Mammary epithelial cell (primary cell): ENCODE measurements at regions of chr2 and their contacts with region 1.

Region 1: DNA sequence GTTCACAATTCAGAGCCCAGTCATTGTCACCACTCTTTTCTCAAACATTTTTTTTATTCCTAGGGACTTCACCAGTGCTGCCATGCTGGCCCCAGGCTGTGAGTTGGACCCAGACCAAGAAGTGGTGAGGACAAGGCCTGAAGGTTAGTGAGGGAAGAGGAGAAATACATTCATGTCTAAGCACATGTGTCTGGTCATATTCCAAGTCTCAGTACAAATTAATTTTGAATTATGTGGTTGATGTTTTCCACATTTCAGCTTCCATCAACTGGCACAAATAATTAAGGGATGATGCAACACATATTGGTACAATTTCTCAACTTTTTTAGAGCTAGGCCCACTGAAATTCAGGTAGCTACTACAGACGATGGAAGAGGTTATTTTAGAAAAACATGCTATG is 106.6 kb upstream of the UPP2 start:
- DNase-seq: no peak
- H3K4me3 ChIP-seq: no peak overlapping the region
- H3K27ac ChIP-seq: no peak overlapping the region
- H3K4me1 ChIP-seq: no peaks in the 10 kb centered on the region
- H3K27me3 ChIP-seq: no peaks in the 10 kb centered on the region
- CTCF ChIP-seq: no peak

Region 2: GRCh38 chr2:157769856-157770255 is 225.3 kb before region 1 on chr2:
- CTCF ChIA-PET with region 1: no interaction called
- dilution Hi-C with region 1: loop called (anchors 25 kb)
- in situ Hi-C with region 1: loop called in 1 of 2 experiments (anchors 5 kb)
- intact Hi-C with region 1: no loop called
- DNase-seq: no peak
- H3K4me3 ChIP-seq: no peak overlapping the region
- H3K27ac ChIP-seq: no peak overlapping the region
- H3K4me1 ChIP-seq: no peaks in the 10 kb centered on the region
- H3K27me3 ChIP-seq: no peaks in the 10 kb centered on the region
- CTCF ChIP-seq: no peak

Region 3: DNA sequence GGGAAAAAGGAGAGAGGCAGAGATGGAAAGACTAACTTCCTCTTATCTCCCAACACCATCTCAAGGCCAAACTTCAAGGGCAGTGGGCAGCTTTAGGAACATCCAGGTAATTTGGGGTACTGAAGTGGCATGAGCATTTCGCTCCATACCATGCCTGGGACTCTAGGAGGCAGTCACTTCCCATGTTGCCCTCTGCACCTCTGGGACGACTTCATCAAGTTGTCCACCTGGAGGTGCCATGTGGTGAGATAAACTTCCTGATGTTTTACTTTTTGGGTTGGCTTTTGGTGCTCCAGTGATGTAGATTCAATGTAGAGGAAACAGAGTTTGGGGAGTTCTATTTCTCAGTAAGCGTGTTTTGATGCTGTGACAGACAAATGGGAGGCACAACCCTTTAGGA is 50.2 kb after region 1 on chr2:
- CTCF ChIA-PET with region 1: no interaction called
- dilution Hi-C with region 1: no loop called
- in situ Hi-C with region 1: no loop called
- intact Hi-C with region 1: no loop called
- DNase-seq: no peak
- H3K4me3 ChIP-seq: no peak overlapping the region
- H3K27ac ChIP-seq: no peak overlapping the region
- H3K4me1 ChIP-seq: no peaks in the 10 kb centered on the region
- H3K27me3 ChIP-seq: no peaks in the 10 kb centered on the region
- CTCF ChIP-seq: peak in 1 of 2 donors; percentile 39

Region 4: DNA sequence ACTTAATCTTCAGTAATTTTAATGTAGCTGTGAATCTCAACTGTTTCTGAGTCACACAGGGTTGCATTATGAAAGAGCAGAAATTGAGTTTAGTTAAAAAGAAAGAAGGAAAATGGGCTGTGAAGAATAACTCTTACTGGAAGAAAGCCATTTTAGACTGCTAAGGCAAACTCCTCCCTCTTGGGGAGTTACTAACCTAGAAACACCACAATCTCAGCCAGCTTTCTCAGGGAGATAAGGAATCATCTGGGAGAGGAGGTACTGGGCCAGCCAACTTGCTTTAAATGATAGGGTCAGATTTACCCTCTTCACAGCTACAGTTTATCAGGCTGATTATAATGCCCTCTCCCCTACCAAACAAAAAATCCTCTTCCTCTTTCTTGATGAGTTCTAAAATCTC is 341.9 kb after region 1 on chr2:
- CTCF ChIA-PET with region 1: no interaction called
- dilution Hi-C with region 1: no loop called
- in situ Hi-C with region 1: no loop called
- intact Hi-C with region 1: no loop called
- DNase-seq: no peak
- H3K4me3 ChIP-seq: no peak overlapping the region
- H3K27ac ChIP-seq: no peak overlapping the region
- H3K4me1 ChIP-seq: no peaks in the 10 kb centered on the region
- H3K27me3 ChIP-seq: no peaks in the 10 kb centered on the region
- CTCF ChIP-seq: no peak